Activated naive CD4-positive, alpha-beta T cell treated with anti-CD3 and anti-CD28 coated beads, Interleukin-2, amount 10 ng/mL, durations not matched to agents 7 days and 5 days (primary cell): ENCODE measurements at regions of chr17 and their contacts with region 1.

Region 1: GRCh38 chr17:28644985-28645939 is at the start of gene BLTP2:
- DNase-seq: peak; percentile 98
- H3K4me3 Mint-ChIP-seq: peak within 1 kb of the TSS; percentile 88
- H3K27ac Mint-ChIP-seq: peak within 1 kb of the TSS; percentile 94
- H3K4me1 Mint-ChIP-seq: peaks cover 36% of the 10 kb centered on the region
- H3K27me3 Mint-ChIP-seq: no peaks in the 10 kb centered on the region

Region 2: DNA sequence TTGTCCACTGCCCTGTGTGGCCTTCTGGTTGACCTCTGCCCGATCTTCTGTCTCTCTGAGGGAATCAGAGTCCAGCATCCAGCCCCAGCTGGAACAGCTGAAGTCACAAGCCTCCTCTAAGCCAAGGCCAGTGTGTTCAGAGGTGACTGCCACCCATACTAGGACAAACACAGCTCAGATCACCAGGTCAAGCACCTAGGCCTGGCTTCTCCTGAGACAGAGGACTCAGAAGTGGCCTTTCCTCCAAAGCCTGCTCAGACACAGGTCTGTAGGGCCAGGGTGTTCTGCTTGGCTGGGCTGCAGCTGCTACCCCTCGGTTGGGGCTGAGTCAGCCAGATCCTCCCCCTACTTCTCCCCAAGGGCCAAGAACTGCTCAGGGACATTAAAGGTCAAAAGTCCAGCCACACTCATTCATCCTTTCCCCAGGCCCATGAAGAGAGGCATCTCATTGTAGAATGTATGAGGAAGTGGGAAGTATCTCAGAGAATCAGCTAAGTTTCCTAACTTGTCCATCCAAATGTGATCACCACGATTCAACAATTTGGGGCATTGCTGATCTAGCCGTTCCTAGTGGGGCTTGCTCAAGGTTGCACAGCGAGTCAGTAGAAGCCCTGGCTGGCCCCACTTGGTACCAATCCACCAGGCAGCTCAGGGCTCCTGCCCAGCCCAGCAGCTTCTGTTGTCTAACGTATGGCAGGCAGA is 246.8 kb before region 1 on chr17:
- CTCF ChIA-PET with region 1: no interaction called
- DNase-seq: no peak
- H3K4me3 Mint-ChIP-seq: no peak overlapping the region
- H3K27ac Mint-ChIP-seq: no peak overlapping the region
- H3K4me1 Mint-ChIP-seq: peaks cover 4% of the 10 kb centered on the region
- H3K27me3 Mint-ChIP-seq: no peaks in the 10 kb centered on the region

Region 3: GRCh38 chr17:28545787-28546415 is 99.4 kb before region 1 on chr17:
- CTCF ChIA-PET with region 1: no interaction called
- DNase-seq: no peak
- H3K4me3 Mint-ChIP-seq: no peak overlapping the region
- H3K27ac Mint-ChIP-seq: no peak overlapping the region
- H3K4me1 Mint-ChIP-seq: peaks cover 35% of the 10 kb centered on the region
- H3K27me3 Mint-ChIP-seq: no peaks in the 10 kb centered on the region

Region 4: DNA sequence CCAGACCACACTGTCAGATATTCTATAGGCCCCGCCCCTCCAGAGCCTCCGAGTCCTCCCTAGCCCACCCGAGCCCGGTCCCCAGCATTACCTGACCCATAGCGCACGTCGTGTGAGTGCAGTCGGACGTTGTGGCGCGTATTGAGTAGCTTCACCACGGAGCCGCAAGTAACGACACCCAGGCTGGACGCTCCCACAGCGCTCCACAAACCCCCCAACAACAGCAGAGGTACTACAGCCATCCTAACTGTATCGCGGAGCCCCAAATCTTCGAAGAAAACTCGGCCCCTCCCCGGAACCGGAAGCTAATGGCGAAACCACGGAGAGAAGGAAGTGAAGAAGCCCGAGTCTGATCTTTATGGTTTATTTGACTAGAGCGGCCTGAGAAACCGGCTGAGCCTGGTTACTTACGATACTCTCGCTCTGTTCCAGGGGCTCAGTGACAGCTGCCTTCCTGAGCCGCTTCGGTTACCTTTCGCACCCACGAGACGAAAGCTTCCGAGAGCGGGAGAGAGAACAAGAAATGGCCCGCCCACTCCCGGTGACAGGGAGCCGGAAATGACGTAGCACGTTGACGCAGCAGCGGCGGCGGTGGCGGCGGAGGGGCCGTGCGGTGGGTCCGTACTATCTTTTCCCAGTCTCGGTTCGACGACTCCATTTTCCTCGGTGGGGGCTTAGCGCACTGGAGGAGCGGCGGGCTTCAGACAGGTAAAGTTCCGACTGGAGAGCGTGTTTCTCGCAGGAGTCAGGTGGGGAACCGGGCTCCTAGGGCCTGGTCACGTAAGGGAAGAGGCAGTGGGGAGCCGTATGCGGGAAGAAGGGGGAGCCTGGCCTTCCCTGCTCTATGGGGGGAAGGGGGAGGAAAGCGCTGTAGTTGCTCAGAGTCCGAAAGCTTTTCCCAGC is 16.6 kb after region 1 on chr17 and contains the starts of genes SDF2 and SUPT6H:
- CTCF ChIA-PET with region 1: interaction called, 21 read pairs
- DNase-seq: peak; percentile 96
- H3K4me3 Mint-ChIP-seq: peak within 1 kb of the TSS; percentile 98
- H3K27ac Mint-ChIP-seq: peak within 1 kb of the TSS; percentile 99
- H3K4me1 Mint-ChIP-seq: peaks cover 49% of the 10 kb centered on the region
- H3K27me3 Mint-ChIP-seq: no peaks in the 10 kb centered on the region

Region 5: GRCh38 chr17:28675980-28676379 is 30.7 kb after region 1 on chr17:
- CTCF ChIA-PET with region 1: interaction called, 35 read pairs
- DNase-seq: peak; percentile 43
- H3K4me3 Mint-ChIP-seq: no peak overlapping the region
- H3K27ac Mint-ChIP-seq: no peak overlapping the region
- H3K4me1 Mint-ChIP-seq: no peaks in the 10 kb centered on the region
- H3K27me3 Mint-ChIP-seq: no peaks in the 10 kb centered on the region

Region 6: GRCh38 chr17:28839221-28839620 is 194.0 kb after region 1 on chr17:
- CTCF ChIA-PET with region 1: no interaction called
- DNase-seq: no peak
- H3K4me3 Mint-ChIP-seq: no peak overlapping the region
- H3K27ac Mint-ChIP-seq: no peak overlapping the region
- H3K4me1 Mint-ChIP-seq: peaks cover 34% of the 10 kb centered on the region
- H3K27me3 Mint-ChIP-seq: no peaks in the 10 kb centered on the region